Gastrocnemius medialis (tissue), 4 donors: ENCODE measurements at regions of chr19 and their contacts with region 1.

Region 1: GRCh38 chr19:50368649-50369570 is 3.5 kb upstream of the NAPSA start:
- DNase-seq: peak; percentile 70 to 83
- ATAC-seq: peak; percentile 94 to 97
- H3K4me3 ChIP-seq: peak overlapping the region; percentile 64 to 74 (median 68)
- H3K27ac ChIP-seq: peak overlapping the region; percentile 49 to 75 (median 64)
- H3K4me1 ChIP-seq: peaks cover 3 to 7% of the 10 kb centered on the region in 2 donors
- H3K27me3 ChIP-seq: no peaks in the 10 kb centered on the region
- CTCF ChIP-seq: peak; percentile 71 to 93 (median 89)
- POLR2A ChIP-seq: no peak

Region 2: GRCh38 chr19:49017666-49018351 is 1351.1 kb before region 1 on chr19:
- in situ Hi-C with region 1: no loop called
- intact Hi-C with region 1: no loop called
- DNase-seq: peak in 1 of 2 donors; percentile 35
- ATAC-seq: peak; percentile 32 to 62
- H3K4me3 ChIP-seq: peak overlapping the region; percentile 55 to 72 (median 57)
- H3K27ac ChIP-seq: no peak overlapping the region
- H3K4me1 ChIP-seq: peaks cover 14 to 19% of the 10 kb centered on the region in 2 donors
- H3K27me3 ChIP-seq: peaks cover 0 to 11% (median 8%) of the 10 kb centered on the region in 3 donors
- CTCF ChIP-seq: peak; percentile 19 to 53 (median 36)
- POLR2A ChIP-seq: no peak

Region 3: GRCh38 chr19:50414864-50415660 is 46.2 kb after region 1 on chr19:
- in situ Hi-C with region 1: loop called in 2 of 4 experiments (anchors 10 kb)
- intact Hi-C with region 1: loop called (anchors 1 kb)
- DNase-seq: peak; percentile 47 to 58
- ATAC-seq: peak; percentile 55 to 74
- H3K4me3 ChIP-seq: no peak overlapping the region
- H3K27ac ChIP-seq: no peak overlapping the region
- H3K4me1 ChIP-seq: peaks cover 0 to 8% of the 10 kb centered on the region in 2 donors
- H3K27me3 ChIP-seq: peaks cover 0 to 14% (median 11%) of the 10 kb centered on the region in 3 donors
- CTCF ChIP-seq: peak; percentile 46 to 87 (median 83)
- POLR2A ChIP-seq: no peak

Region 4: GRCh38 chr19:50537762-50538230 is 168.9 kb after region 1 on chr19:
- in situ Hi-C with region 1: no loop called
- intact Hi-C with region 1: no loop called
- DNase-seq: peak in 1 of 2 donors; percentile 47
- ATAC-seq: peak in 1 of 2 donors; percentile 47
- H3K4me3 ChIP-seq: no peak overlapping the region
- H3K27ac ChIP-seq: no peak overlapping the region
- H3K4me1 ChIP-seq: no peaks in the 10 kb centered on the region
- H3K27me3 ChIP-seq: peaks cover 0 to 4% (median under 1%) of the 10 kb centered on the region in 3 donors
- CTCF ChIP-seq: peak in 4 of 5 experiments; percentile 33 to 64 (median 56)
- POLR2A ChIP-seq: no peak